CD4-positive, alpha-beta memory T cell (primary cell): ENCODE measurements at regions of chr19 and their contacts with region 1.

Region 1: GRCh38 chr19:7355151-7355820 is 6.5 kb downstream of the ARHGEF18 start:
- DNase-seq: no peak
- H3K4me3 ChIP-seq: no peak overlapping the region
- H3K4me3 Mint-ChIP-seq: peak overlapping the region in 3 of 8 donors; percentile 4 to 94 (median 82)
- H3K27ac ChIP-seq: peak overlapping the region; percentile 35
- H3K27ac Mint-ChIP-seq: peak overlapping the region in 5 of 7 donors; percentile 37 to 95 (median 83)
- H3K4me1 ChIP-seq: peaks cover 83% of the 10 kb centered on the region
- H3K4me1 Mint-ChIP-seq: peaks cover 54 to 95% (median 68%) of the 10 kb centered on the region in 4 donors
- H3K27me3 ChIP-seq: no peaks in the 10 kb centered on the region
- H3K27me3 Mint-ChIP-seq: no peaks in the 10 kb centered on the region

Region 2: GRCh38 chr19:7366701-7367420 is 11.6 kb after region 1 on chr19:
- CTCF ChIA-PET with region 1: interaction called, 50 read pairs
- POLR2A ChIA-PET with region 1: interaction called, 50 read pairs
- intact Hi-C with region 1: no loop called
- DNase-seq: peak in 2 of 5 donors; percentile 31 to 32
- H3K4me3 ChIP-seq: no peak overlapping the region
- H3K4me3 Mint-ChIP-seq: peak overlapping the region in 1 of 8 donors; percentile 63
- H3K27ac ChIP-seq: no peak overlapping the region
- H3K27ac Mint-ChIP-seq: peak overlapping the region in 6 of 7 donors; percentile 22 to 88 (median 68)
- H3K4me1 ChIP-seq: peaks cover 16% of the 10 kb centered on the region
- H3K4me1 Mint-ChIP-seq: peaks cover 18 to 48% (median 32%) of the 10 kb centered on the region in 4 donors
- H3K27me3 ChIP-seq: no peaks in the 10 kb centered on the region
- H3K27me3 Mint-ChIP-seq: no peaks in the 10 kb centered on the region

Region 3: GRCh38 chr19:7376151-7376852 is 21.0 kb after region 1 on chr19:
- CTCF ChIA-PET with region 1: interaction called, 20 read pairs
- POLR2A ChIA-PET with region 1: interaction called, 11 read pairs
- intact Hi-C with region 1: loop called (anchors 1 kb)
- DNase-seq: no peak
- H3K4me3 ChIP-seq: no peak overlapping the region
- H3K4me3 Mint-ChIP-seq: no peak overlapping the region
- H3K27ac ChIP-seq: no peak overlapping the region
- H3K27ac Mint-ChIP-seq: peak overlapping the region in 1 of 7 donors; percentile 64
- H3K4me1 ChIP-seq: peaks cover 4% of the 10 kb centered on the region
- H3K4me1 Mint-ChIP-seq: peaks cover 6 to 24% (median 7%) of the 10 kb centered on the region in 4 donors
- H3K27me3 ChIP-seq: no peaks in the 10 kb centered on the region
- H3K27me3 Mint-ChIP-seq: no peaks in the 10 kb centered on the region

Region 4: DNA sequence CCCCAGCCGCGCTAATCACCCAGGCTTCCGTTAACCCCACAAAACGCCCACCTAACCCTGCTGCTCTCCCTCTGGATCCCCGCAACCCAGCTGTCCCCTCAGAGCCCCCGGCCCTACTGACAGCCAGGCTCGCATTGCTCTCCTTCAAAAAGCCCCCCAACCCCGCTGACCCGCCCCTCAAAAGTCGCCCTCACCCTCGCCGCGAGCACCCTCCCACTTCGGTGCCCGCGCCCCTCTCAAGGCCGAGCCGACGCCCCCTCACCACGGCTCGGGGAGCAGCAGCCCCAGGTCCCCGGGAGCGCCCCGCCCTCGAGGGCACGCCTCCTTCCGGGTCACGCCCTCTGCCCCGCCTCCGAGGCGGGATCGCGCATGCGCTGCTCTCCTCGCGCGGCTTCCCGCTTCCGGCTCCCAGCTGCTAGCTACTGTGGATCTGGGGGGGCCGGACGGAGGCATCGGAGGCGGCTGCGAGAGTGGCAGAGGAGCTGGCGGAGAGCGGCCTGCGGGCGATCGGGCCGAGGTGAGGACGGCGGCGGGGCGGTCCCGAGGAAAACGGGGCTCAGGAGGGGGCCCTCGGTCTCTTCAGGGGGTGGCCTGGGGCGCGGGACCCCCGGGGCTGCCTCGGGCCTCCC is 39.6 kb after region 1 on chr19:
- CTCF ChIA-PET with region 1: interaction called, 24 read pairs
- POLR2A ChIA-PET with region 1: interaction called, 15 read pairs
- intact Hi-C with region 1: loop called (anchors 5 kb)
- DNase-seq: peak; percentile 88 to 95 (median 90)
- H3K4me3 ChIP-seq: peak overlapping the region in 1 of 2 donors; percentile 57
- H3K4me3 Mint-ChIP-seq: peak overlapping the region; percentile 84 to 92 (median 87)
- H3K27ac ChIP-seq: peak overlapping the region; percentile 58
- H3K27ac Mint-ChIP-seq: peak overlapping the region; percentile 78 to 96 (median 93)
- H3K4me1 ChIP-seq: peaks cover 46% of the 10 kb centered on the region
- H3K4me1 Mint-ChIP-seq: peaks cover 26 to 56% (median 34%) of the 10 kb centered on the region in 4 donors
- H3K27me3 ChIP-seq: no peaks in the 10 kb centered on the region
- H3K27me3 Mint-ChIP-seq: no peaks in the 10 kb centered on the region

Region 5: GRCh38 chr19:7427944-7428343 is 72.7 kb after region 1 on chr19:
- CTCF ChIA-PET with region 1: no interaction called
- POLR2A ChIA-PET with region 1: no interaction called
- intact Hi-C with region 1: no loop called
- DNase-seq: no peak
- H3K4me3 ChIP-seq: no peak overlapping the region
- H3K4me3 Mint-ChIP-seq: peak overlapping the region in 3 of 8 donors; percentile 5 to 67 (median 22)
- H3K27ac ChIP-seq: peak overlapping the region; percentile 55
- H3K27ac Mint-ChIP-seq: peak overlapping the region; percentile 35 to 93 (median 88)
- H3K4me1 ChIP-seq: peaks cover 5% of the 10 kb centered on the region
- H3K4me1 Mint-ChIP-seq: peaks cover 6 to 14% (median 7%) of the 10 kb centered on the region in 4 donors
- H3K27me3 ChIP-seq: no peaks in the 10 kb centered on the region
- H3K27me3 Mint-ChIP-seq: no peaks in the 10 kb centered on the region

Region 6: GRCh38 chr19:7515645-7516151 is 160.4 kb after region 1 on chr19 and contains the start of gene ZNF358:
- CTCF ChIA-PET with region 1: no interaction called
- POLR2A ChIA-PET with region 1: no interaction called
- intact Hi-C with region 1: no loop called
- DNase-seq: no peak
- H3K4me3 ChIP-seq: peak within 1 kb of the TSS in 1 of 2 donors; percentile 32
- H3K4me3 Mint-ChIP-seq: peak within 1 kb of the TSS; percentile 68 to 91 (median 85)
- H3K27ac ChIP-seq: no peak within 1 kb of the TSS
- H3K27ac Mint-ChIP-seq: peak within 1 kb of the TSS in 6 of 7 donors; percentile 38 to 95 (median 82)
- H3K4me1 ChIP-seq: peaks cover 10% of the 10 kb centered on the region
- H3K4me1 Mint-ChIP-seq: peaks cover 4 to 23% (median 11%) of the 10 kb centered on the region in 4 donors
- H3K27me3 ChIP-seq: peaks cover 4% of the 10 kb centered on the region
- H3K27me3 Mint-ChIP-seq: peaks cover 8 to 16% of the 10 kb centered on the region in 2 donors
- total RNA-seq, gene ZNF358: 8.4 to 8.7 TPM